Dendritic cell treated with granulocyte-macrophage colony-stimulating factor and Interleukin-4, amounts not matched to agents 40 ng/mL and 50 ng/mL, for 4 days (primary cell): ENCODE measurements at regions of chr3 and their contacts with region 1.

Region 1: GRCh38 chr3:5426094-5426883 is 238.8 kb downstream of the EDEM1 start:
- H3K4me3 Mint-ChIP-seq: no peak overlapping the region
- H3K27ac Mint-ChIP-seq: peak overlapping the region; percentile 54
- H3K4me1 Mint-ChIP-seq: peaks cover 71% of the 10 kb centered on the region
- H3K27me3 Mint-ChIP-seq: peaks cover 22% of the 10 kb centered on the region

Region 2: GRCh38 chr3:5304789-5305683 is 121.3 kb before region 1 on chr3:
- intact Hi-C with region 1: loop called (anchors 10 kb)
- H3K4me3 Mint-ChIP-seq: no peak overlapping the region
- H3K27ac Mint-ChIP-seq: no peak overlapping the region
- H3K4me1 Mint-ChIP-seq: no peaks in the 10 kb centered on the region
- H3K27me3 Mint-ChIP-seq: no peaks in the 10 kb centered on the region

Region 3: GRCh38 chr3:5401002-5401401 is 25.3 kb before region 1 on chr3:
- intact Hi-C with region 1: no loop called
- H3K4me3 Mint-ChIP-seq: no peak overlapping the region
- H3K27ac Mint-ChIP-seq: no peak overlapping the region
- H3K4me1 Mint-ChIP-seq: no peaks in the 10 kb centered on the region
- H3K27me3 Mint-ChIP-seq: no peaks in the 10 kb centered on the region

Region 4: DNA sequence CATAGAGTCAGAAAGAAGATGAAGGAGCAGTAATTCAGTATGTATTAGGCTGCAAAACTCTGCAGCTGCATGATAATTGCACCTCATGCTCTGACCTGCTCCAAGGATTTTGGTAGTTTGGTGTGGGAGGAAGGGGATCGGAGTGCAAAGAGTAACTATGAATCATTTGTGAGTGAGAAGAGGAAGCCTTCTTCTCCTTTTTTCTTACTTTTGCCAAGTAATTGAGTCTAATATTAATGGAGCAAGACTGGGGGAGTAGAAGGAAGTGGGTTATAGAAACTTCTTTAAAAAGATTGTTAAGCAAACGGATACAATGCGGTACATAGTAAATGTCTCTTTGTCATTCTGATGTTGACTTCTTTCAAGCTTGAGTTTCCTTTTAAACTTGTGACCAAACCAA is 37.7 kb after region 1 on chr3:
- intact Hi-C with region 1: loop called (anchors 5 kb)
- H3K4me3 Mint-ChIP-seq: peak overlapping the region; percentile 30
- H3K27ac Mint-ChIP-seq: peak overlapping the region; percentile 55
- H3K4me1 Mint-ChIP-seq: peaks cover 50% of the 10 kb centered on the region
- H3K27me3 Mint-ChIP-seq: peaks cover 9% of the 10 kb centered on the region

Region 5: GRCh38 chr3:5731094-5731493 is 304.8 kb after region 1 on chr3:
- intact Hi-C with region 1: loop called (anchors 1 kb)
- H3K4me3 Mint-ChIP-seq: no peak overlapping the region
- H3K27ac Mint-ChIP-seq: no peak overlapping the region
- H3K4me1 Mint-ChIP-seq: peaks cover 16% of the 10 kb centered on the region
- H3K27me3 Mint-ChIP-seq: no peaks in the 10 kb centered on the region

Region 6: GRCh38 chr3:6799264-6799915 is 1373.1 kb after region 1 on chr3:
- intact Hi-C with region 1: loop called (anchors 2 kb)
- H3K4me3 Mint-ChIP-seq: no peak overlapping the region
- H3K27ac Mint-ChIP-seq: no peak overlapping the region
- H3K4me1 Mint-ChIP-seq: no peaks in the 10 kb centered on the region
- H3K27me3 Mint-ChIP-seq: no peaks in the 10 kb centered on the region